Activated CD4-positive, alpha-beta memory T cell treated with anti-CD3 and anti-CD28 coated beads for 36 hours (primary cell): ENCODE measurements at regions of chr3 and their contacts with region 1.

Region 1: DNA sequence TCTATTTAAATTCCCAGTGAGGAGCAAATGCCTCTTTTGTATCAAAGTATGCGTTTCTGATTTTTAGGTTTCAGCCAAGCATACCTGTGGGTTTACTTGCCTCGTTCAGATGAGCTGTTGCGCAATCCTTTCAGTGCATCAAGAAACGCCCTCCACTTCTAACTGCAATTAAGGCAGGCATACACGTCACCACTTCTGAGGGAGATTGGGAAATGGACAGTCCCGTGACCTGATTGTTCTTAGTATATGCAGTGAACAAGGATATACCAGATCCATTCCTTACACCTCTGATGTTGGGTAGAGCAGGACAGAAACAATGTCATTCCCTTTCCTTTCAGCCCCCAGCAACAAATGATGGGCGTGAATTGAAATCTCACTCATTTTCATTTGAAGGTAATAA is 219.0 kb downstream of the ITPR1 start:
- DNase-seq: no peak
- H3K4me3 Mint-ChIP-seq: no peak overlapping the region
- H3K27ac Mint-ChIP-seq: no peak overlapping the region
- H3K4me1 Mint-ChIP-seq: peaks cover 1% of the 10 kb centered on the region
- H3K27me3 Mint-ChIP-seq: no peaks in the 10 kb centered on the region

Region 2: GRCh38 chr3:4807381-4808280 is 95.5 kb after region 1 on chr3:
- CTCF ChIA-PET with region 1: interaction called, 26 read pairs
- POLR2A ChIA-PET with region 1: interaction called, 5 read pairs
- intact Hi-C with region 1: no loop called
- DNase-seq: no peak
- H3K4me3 Mint-ChIP-seq: peak overlapping the region; percentile 45
- H3K27ac Mint-ChIP-seq: peak overlapping the region; percentile 4
- H3K4me1 Mint-ChIP-seq: peaks cover 42% of the 10 kb centered on the region
- H3K27me3 Mint-ChIP-seq: no peaks in the 10 kb centered on the region

Region 3: GRCh38 chr3:4888913-4889846 is 177.0 kb after region 1 on chr3:
- CTCF ChIA-PET with region 1: interaction called, 9 read pairs
- POLR2A ChIA-PET with region 1: no interaction called
- intact Hi-C with region 1: loop called (anchors 1 kb)
- DNase-seq: peak; percentile 67
- H3K4me3 Mint-ChIP-seq: no peak overlapping the region
- H3K27ac Mint-ChIP-seq: peak overlapping the region; percentile 90
- H3K4me1 Mint-ChIP-seq: peaks cover 31% of the 10 kb centered on the region
- H3K27me3 Mint-ChIP-seq: no peaks in the 10 kb centered on the region

Region 4: DNA sequence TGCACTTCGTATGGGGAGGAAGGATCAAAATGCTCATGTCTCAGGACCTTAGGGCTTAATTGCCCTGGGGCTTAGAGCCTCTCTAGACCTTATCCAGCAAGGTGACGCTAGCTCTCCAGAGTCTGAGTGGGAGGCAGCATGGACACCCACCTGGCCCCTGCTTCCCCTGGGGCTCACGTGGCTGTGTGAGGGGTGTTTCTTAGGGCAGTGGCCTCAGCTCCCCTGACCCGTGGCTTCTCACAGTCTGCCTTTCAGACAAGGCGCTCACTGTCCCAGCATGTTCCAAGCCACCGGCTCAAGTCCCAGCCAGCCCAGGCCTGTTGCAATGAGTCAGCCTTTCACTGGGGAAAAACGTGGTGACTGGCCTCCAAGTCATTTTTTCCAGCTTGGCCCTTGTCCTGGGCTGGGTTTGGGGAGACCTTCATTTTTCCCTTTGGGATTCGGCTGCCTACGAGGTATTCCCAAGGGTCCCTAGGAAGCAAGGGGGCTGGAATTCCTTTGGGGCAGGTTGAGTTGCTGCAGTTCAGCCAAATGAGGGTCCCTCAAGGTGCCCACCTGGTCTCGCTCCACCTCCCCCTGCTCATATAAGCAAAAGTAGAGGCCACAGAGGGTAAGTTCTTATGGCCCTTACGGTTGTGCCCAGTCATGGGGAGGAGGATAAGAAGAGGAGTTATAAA is 282.8 kb after region 1 on chr3:
- CTCF ChIA-PET with region 1: interaction called, 11 read pairs
- POLR2A ChIA-PET with region 1: no interaction called
- intact Hi-C with region 1: no loop called
- DNase-seq: peak; percentile 29
- H3K4me3 Mint-ChIP-seq: no peak overlapping the region
- H3K27ac Mint-ChIP-seq: peak overlapping the region; percentile 60
- H3K4me1 Mint-ChIP-seq: peaks cover 30% of the 10 kb centered on the region
- H3K27me3 Mint-ChIP-seq: no peaks in the 10 kb centered on the region

Region 5: DNA sequence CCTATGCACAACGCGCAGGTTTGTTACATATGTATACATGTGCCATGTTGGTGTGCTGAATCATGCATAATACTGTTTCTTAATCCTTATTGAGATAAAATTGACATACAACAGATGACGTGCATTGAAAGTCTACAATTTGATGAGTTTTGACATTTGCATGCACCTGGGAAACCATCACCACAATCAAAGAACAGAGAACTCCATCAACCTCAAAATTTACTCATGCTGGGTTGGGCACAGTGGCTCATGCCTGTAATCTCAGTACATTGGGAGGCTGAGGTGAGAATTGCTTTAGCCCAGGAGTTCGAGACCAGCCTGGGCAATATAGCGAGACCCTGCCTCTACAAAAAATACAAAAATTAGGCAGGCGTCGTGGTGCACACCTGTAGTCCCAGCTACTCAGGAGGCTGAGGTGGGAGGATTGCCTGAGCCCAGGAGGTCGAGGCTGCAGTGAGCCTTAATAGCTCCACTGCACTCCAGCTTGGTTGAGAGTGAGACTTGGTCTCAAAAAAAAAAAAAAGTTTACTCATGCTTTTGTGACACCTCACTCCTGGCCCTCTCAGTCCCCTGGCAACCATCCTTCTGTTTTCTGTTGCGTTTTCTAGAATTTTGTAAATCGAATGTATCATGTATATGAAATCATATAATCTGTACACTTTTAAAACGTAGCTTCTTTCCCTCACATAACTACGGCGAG is 323.7 kb after region 1 on chr3:
- CTCF ChIA-PET with region 1: interaction called, 17 read pairs
- POLR2A ChIA-PET with region 1: no interaction called
- intact Hi-C with region 1: no loop called
- DNase-seq: no peak
- H3K4me3 Mint-ChIP-seq: no peak overlapping the region
- H3K27ac Mint-ChIP-seq: no peak overlapping the region
- H3K4me1 Mint-ChIP-seq: peaks cover 19% of the 10 kb centered on the region
- H3K27me3 Mint-ChIP-seq: no peaks in the 10 kb centered on the region

Region 6: GRCh38 chr3:5057857-5058324 is 345.7 kb after region 1 on chr3:
- CTCF ChIA-PET with region 1: interaction called, 267 read pairs
- POLR2A ChIA-PET with region 1: no interaction called
- intact Hi-C with region 1: loop called (anchors 1 kb)
- DNase-seq: peak; percentile 87
- H3K4me3 Mint-ChIP-seq: no peak overlapping the region
- H3K27ac Mint-ChIP-seq: no peak overlapping the region
- H3K4me1 Mint-ChIP-seq: peaks cover 16% of the 10 kb centered on the region
- H3K27me3 Mint-ChIP-seq: peaks cover 8% of the 10 kb centered on the region

Region 7: DNA sequence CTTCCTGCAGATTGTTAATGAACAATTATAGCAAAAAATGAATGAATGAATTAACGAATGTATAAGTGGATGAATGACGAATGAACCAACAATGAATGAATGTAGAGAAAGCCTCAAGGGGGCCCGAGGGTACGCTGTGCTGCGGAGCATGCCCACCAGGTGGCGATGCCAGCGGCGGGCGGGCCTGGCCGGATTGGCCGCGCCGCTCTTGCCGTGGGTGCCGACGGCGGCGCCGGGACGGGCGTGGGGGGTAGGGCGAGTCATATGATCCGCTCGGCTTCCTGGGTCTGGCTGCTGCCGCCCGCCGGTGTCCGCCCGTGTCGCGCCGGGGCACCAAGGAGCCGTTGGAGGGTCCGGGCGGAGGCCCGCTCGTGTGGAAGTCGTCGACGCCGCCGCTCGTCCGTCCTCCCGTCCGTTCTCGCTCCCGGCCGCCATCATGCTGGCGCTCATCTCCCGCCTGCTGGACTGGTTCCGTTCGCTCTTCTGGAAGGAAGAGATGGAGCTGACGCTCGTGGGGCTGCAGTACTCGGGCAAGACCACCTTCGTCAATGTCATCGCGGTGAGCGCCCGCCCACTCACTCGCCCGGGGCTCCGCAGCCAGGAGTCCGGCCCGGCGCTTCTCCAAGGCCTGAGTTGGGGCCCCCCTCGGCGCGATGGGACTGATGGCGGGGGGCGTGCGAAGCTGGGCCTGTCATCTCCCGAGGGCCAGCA is 410.0 kb after region 1 on chr3 and contains the start of gene ARL8B:
- CTCF ChIA-PET with region 1: interaction called, 7 read pairs
- POLR2A ChIA-PET with region 1: no interaction called
- intact Hi-C with region 1: loop called (anchors 1 kb)
- DNase-seq: peak; percentile 95
- H3K4me3 Mint-ChIP-seq: peak within 1 kb of the TSS; percentile 85
- H3K27ac Mint-ChIP-seq: peak within 1 kb of the TSS; percentile 92
- H3K4me1 Mint-ChIP-seq: peaks cover 41% of the 10 kb centered on the region
- H3K27me3 Mint-ChIP-seq: no peaks in the 10 kb centered on the region
- total RNA-seq, gene ARL8B: 55.4 to 58.5 TPM